A549 (cell line): ENCODE measurements at regions of chr14 and their contacts with region 1.

Region 1: DNA sequence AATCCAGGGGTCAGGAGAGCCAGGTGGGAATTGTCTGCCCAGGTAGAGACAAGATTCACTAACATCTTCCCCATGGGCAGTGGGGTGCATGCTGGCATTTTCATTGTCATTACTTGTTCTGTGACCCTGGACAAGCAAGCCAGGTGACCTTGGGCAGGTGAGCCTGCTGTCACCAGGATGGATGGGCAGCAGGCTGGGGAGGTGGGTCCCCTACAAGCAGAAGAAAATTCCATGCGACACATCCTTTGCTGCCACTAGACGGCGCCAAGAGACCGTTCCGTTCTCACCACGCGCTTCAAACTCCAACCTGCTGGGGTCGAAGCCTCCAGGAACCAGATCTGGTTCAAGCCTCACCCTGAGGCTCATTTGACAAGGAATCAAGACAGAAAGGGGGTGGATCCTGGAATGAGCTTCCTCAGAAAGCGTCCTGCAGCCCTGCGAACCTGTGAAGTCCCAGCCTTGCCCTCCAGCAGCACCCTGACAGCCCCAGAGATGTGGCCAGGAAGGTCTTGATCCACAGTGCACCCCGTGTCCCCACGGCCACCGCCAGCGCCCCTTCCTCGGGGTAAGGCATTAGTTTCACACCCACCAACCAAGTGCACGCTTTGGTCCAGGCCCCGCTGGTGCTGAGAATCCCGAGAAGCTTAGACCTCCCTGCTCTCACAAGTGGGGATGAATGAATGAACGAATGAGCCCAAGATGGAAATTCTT is 3.2 kb upstream of the DYNC1H1 start:
- DNase-seq: peak; percentile 77 to 89
- ATAC-seq: peak; percentile 11 to 60
- H3K4me3 ChIP-seq: no peak overlapping the region
- H3K27ac ChIP-seq: peak overlapping the region; percentile 82 to 99
- H3K4me1 ChIP-seq: peaks cover 28% of the 10 kb centered on the region
- CTCF ChIP-seq: peak; percentile 96
- EP300 ChIP-seq: no peak
- POLR2A ChIP-seq: no peak
- RAD21 ChIP-seq: peak; percentile 96 to 97

Region 2: DNA sequence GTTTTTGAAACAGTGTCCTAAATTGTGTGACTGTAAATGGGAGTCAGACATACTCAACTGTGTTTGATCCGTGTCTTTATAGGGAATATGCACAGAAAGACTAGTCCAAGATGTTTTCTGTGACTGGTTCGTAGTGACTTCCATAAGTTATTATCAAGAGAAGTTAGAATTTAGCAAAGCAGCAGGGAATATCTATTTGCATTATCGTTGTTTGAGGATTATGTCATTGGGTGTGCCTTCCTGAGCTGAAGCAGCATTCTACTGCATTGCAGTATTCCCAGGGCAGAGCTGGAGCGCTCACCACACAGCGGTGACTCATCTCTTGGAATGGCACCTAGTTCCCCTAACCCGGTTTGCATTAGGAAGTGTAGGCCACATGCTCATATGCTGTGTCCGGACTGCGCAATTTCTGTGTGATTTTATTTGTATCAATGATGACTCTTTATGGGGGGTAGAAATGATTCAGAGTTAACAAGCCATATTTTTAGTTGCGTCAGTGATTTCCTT is 11.2 kb after region 1 on chr14:
- CTCF ChIA-PET with region 1: interaction called, 37 read pairs
- POLR2A ChIA-PET with region 1: interaction called, 4 read pairs
- DNase-seq: peak; percentile 90 to 97
- ATAC-seq: peak; percentile 99 to 100
- H3K4me3 ChIP-seq: peak overlapping the region; percentile 24
- H3K27ac ChIP-seq: peak overlapping the region; percentile 87 to 89
- H3K4me1 ChIP-seq: peaks cover 79% of the 10 kb centered on the region
- CTCF ChIP-seq: no peak
- EP300 ChIP-seq: peak; percentile 82 to 90; a peak in 4 of 5 replicates
- POLR2A ChIP-seq: no peak
- RAD21 ChIP-seq: 0 out of 5 replicates have a peak, but pooled peaks of 1 of the 2 experiments have one; percentile 26

Region 3: DNA sequence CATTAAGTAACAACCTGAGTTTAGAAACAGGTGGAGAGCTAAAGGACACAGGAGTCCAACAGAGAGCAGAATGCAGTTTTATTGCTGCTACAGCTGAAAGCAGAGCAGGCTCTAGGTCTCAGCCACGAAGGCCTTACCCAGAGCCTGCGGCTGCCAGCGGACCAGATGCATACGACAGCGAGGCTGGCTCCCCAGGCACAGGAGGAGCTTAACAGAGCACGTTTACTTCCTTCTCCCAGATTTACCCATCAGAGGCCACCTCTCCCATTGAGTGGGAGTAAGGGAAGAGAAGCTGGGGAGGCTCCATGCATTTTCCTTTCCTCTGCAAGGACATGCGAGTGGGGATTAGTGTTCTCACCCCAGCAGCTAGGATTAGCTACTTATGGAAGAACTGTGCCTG is 25.8 kb after region 1 on chr14:
- CTCF ChIA-PET with region 1: interaction called, 24 read pairs
- POLR2A ChIA-PET with region 1: no interaction called
- DNase-seq: no peak
- ATAC-seq: no peak
- H3K4me3 ChIP-seq: no peak overlapping the region
- H3K27ac ChIP-seq: no peak overlapping the region
- H3K4me1 ChIP-seq: no peaks in the 10 kb centered on the region
- CTCF ChIP-seq: no peak
- EP300 ChIP-seq: no peak
- POLR2A ChIP-seq: no peak
- RAD21 ChIP-seq: no peak

Region 4: GRCh38 chr14:102011631-102012030 is 50.5 kb after region 1 on chr14:
- CTCF ChIA-PET with region 1: interaction called, 18 read pairs
- POLR2A ChIA-PET with region 1: no interaction called
- DNase-seq: no peak
- ATAC-seq: no peak
- H3K4me3 ChIP-seq: no peak overlapping the region
- H3K27ac ChIP-seq: no peak overlapping the region
- H3K4me1 ChIP-seq: no peaks in the 10 kb centered on the region
- CTCF ChIP-seq: no peak
- EP300 ChIP-seq: no peak
- POLR2A ChIP-seq: no peak
- RAD21 ChIP-seq: no peak

Region 5: GRCh38 chr14:102034301-102034700 is 73.1 kb after region 1 on chr14:
- CTCF ChIA-PET with region 1: interaction called, 20 read pairs
- POLR2A ChIA-PET with region 1: no interaction called
- DNase-seq: peak in 1 of 2 experiments; percentile 22
- ATAC-seq: no peak; a peak in 2 of 6 replicates
- H3K4me3 ChIP-seq: no peak overlapping the region
- H3K27ac ChIP-seq: no peak overlapping the region
- H3K4me1 ChIP-seq: no peaks in the 10 kb centered on the region; the same call in 2 of the 3 replicates
- CTCF ChIP-seq: no peak
- EP300 ChIP-seq: no peak
- POLR2A ChIP-seq: no peak
- RAD21 ChIP-seq: no peak

Region 6: DNA sequence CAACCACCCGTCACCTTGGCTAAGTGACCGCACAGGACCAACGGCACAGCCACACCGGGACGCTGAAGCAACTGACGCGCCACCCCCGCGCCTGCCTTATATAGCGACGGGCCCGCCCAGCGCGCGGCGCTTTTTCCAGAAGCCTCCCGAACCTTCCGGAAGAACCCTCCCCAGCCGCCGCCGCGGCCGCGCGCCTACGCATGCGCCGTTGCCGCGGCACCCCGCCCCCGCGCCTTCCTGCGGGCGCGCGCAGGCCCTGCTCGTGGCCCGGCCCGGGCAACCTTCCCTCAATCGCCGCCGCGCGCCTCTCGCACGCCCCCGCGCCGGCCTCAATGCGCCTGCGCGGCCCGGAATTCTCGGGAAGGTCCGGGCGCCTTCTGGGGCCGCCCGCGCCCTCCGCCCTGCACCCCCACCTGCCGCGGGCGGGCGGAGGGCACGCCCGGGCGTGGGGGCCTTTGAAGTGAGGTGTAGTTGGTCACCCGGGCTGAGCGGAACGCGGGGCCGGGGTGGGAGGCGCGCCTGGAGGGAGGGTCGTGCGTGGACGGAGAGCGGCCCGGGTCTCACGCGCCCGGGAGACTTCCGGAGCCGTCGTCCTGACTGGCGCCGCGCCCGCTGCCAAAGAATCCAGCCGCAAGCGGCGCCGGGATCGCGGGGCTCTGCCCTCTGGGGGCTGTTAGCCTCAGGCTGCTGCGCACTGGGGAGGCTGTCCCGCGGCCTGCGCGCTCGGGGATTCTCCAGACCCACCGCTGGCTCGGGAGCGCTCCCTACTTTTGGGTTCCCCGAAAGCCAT is 126.0 kb after region 1 on chr14 and contains the start of gene HSP90AA1:
- CTCF ChIA-PET with region 1: interaction called, 29 read pairs
- POLR2A ChIA-PET with region 1: no interaction called
- DNase-seq: peak; percentile 85 to 93
- ATAC-seq: peak; percentile 84 to 85
- H3K4me3 ChIP-seq: peak within 1 kb of the TSS; percentile 97
- H3K27ac ChIP-seq: peak within 1 kb of the TSS; percentile 95 to 97
- H3K4me1 ChIP-seq: peaks cover 39% of the 10 kb centered on the region
- CTCF ChIP-seq: no peak
- EP300 ChIP-seq: no peak
- POLR2A ChIP-seq: peak; percentile 100
- RAD21 ChIP-seq: no peak
- polyA plus RNA-seq, gene HSP90AA1: 944 and 1,087 TPM in 2 replicates